ENCODE measurements at regions of chr20 and their contacts with region 1.

Region 1: GRCh38 chr20:47379433-47380150 is 23.1 kb upstream of the ZMYND8 start:
- DNase-seq: no peak
- H3K4me3 ChIP-seq: no peak overlapping the region
- H3K27ac ChIP-seq: no peak overlapping the region
- H3K4me1 ChIP-seq: peaks cover 21% of the 10 kb centered on the region
- H3K27me3 ChIP-seq: no peaks in the 10 kb centered on the region
- CTCF ChIP-seq: no peak

Region 2: GRCh38 chr20:47196091-47197081 is 183.2 kb before region 1 on chr20:
- CTCF ChIA-PET with region 1: interaction called, 9 read pairs
- POLR2A ChIA-PET with region 1: interaction called, 3 read pairs
- intact Hi-C with region 1: loop called (anchors 1 kb)
- DNase-seq: peak; percentile 72 to 82
- H3K4me3 ChIP-seq: no peak overlapping the region
- H3K27ac ChIP-seq: no peak overlapping the region
- H3K4me1 ChIP-seq: 0 out of 2 replicates have a peak, but pooled peaks cover 10% of the 10 kb centered on the region
- H3K27me3 ChIP-seq: no peaks in the 10 kb centered on the region
- CTCF ChIP-seq: peak; percentile 99

Region 3: GRCh38 chr20:47296950-47297349 is 82.6 kb before region 1 on chr20:
- CTCF ChIA-PET with region 1: no interaction called
- POLR2A ChIA-PET with region 1: no interaction called
- intact Hi-C with region 1: loop called (anchors 1 kb)
- DNase-seq: no peak
- H3K4me3 ChIP-seq: no peak overlapping the region
- H3K27ac ChIP-seq: no peak overlapping the region
- H3K4me1 ChIP-seq: 0 out of 2 replicates have a peak, but pooled peaks cover 3% of the 10 kb centered on the region
- H3K27me3 ChIP-seq: no peaks in the 10 kb centered on the region
- CTCF ChIP-seq: no peak

Region 4: DNA sequence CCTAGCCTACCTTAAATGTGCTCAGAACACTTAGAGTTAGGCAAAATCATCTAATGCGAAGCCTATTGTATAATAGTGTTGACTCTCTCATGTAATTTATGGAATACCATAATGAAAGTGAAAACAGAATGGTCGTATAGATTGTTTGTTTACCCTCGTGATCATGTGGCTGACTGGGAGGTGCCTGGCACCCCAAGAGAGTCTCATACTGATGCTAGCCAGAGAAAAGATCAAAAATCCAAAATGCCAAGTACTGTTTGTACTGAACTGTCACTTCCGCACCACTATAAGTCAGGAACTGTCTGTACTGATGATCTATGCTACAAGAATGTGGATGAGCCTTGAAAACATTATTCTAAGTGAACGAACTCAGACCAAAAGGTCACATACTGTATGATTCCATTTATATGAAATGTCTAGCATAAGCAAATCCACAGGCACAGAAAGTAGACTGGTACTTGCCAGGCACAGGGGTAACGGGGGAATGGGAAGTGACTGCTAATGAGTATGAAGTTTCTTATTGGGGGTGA is 45.5 kb before region 1 on chr20:
- CTCF ChIA-PET with region 1: interaction called, 7 read pairs
- POLR2A ChIA-PET with region 1: interaction called, 4 read pairs
- intact Hi-C with region 1: loop called (anchors 5 kb)
- DNase-seq: peak; percentile 50 to 97
- H3K4me3 ChIP-seq: peak overlapping the region; percentile 33; the same call in 1 of the 2 replicates
- H3K27ac ChIP-seq: peak overlapping the region; percentile 69
- H3K4me1 ChIP-seq: peaks cover 67% of the 10 kb centered on the region
- H3K27me3 ChIP-seq: no peaks in the 10 kb centered on the region
- CTCF ChIP-seq: no peak

Region 5: GRCh38 chr20:47445291-47445690 is 65.7 kb after region 1 on chr20:
- CTCF ChIA-PET with region 1: no interaction called
- POLR2A ChIA-PET with region 1: no interaction called
- intact Hi-C with region 1: no loop called
- DNase-seq: no peak
- H3K4me3 ChIP-seq: no peak overlapping the region
- H3K27ac ChIP-seq: no peak overlapping the region
- H3K4me1 ChIP-seq: peaks cover 13% of the 10 kb centered on the region
- H3K27me3 ChIP-seq: no peaks in the 10 kb centered on the region
- CTCF ChIP-seq: no peak

Region 6: DNA sequence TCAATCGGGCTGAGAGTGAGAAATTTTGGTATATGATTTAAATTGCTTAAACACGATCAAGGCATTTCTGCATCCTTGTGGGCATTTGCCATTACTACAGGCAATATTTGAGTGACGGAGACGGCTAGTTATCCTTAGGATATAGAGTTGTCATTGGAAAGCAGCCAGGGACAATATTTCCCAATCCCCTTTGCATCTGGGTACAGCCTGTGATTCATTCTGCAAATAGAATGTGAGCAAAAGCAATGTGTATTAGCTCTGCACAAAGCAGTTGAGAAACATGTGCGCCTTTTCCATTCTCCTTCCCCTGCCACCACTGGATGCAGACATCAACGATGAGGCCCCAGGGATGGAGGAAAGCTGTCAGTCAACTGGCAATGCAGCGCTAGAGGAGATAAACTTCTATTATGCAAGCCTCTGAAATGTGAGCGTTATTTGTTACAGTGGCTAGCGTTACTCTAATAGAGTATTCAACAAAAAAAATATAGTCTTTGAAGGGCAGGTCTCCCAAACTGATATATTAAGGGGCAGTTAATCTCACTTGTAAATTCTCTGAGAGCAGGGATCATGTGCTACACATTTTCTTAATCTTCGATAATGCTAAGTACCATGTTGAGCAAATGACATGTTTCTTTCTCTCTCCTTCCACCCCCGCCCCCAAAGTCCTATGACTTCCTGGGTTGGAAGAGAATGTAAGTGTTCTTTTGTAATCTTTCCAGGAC is 84.9 kb after region 1 on chr20:
- CTCF ChIA-PET with region 1: interaction called, 7 read pairs
- POLR2A ChIA-PET with region 1: no interaction called
- intact Hi-C with region 1: loop called (anchors 1 kb)
- DNase-seq: peak; percentile 79 to 99
- H3K4me3 ChIP-seq: no peak overlapping the region; the same call in 1 of the 2 replicates
- H3K27ac ChIP-seq: peak overlapping the region; percentile 73
- H3K4me1 ChIP-seq: peaks cover 29% of the 10 kb centered on the region
- H3K27me3 ChIP-seq: no peaks in the 10 kb centered on the region
- CTCF ChIP-seq: peak; percentile 78

Region 7: DNA sequence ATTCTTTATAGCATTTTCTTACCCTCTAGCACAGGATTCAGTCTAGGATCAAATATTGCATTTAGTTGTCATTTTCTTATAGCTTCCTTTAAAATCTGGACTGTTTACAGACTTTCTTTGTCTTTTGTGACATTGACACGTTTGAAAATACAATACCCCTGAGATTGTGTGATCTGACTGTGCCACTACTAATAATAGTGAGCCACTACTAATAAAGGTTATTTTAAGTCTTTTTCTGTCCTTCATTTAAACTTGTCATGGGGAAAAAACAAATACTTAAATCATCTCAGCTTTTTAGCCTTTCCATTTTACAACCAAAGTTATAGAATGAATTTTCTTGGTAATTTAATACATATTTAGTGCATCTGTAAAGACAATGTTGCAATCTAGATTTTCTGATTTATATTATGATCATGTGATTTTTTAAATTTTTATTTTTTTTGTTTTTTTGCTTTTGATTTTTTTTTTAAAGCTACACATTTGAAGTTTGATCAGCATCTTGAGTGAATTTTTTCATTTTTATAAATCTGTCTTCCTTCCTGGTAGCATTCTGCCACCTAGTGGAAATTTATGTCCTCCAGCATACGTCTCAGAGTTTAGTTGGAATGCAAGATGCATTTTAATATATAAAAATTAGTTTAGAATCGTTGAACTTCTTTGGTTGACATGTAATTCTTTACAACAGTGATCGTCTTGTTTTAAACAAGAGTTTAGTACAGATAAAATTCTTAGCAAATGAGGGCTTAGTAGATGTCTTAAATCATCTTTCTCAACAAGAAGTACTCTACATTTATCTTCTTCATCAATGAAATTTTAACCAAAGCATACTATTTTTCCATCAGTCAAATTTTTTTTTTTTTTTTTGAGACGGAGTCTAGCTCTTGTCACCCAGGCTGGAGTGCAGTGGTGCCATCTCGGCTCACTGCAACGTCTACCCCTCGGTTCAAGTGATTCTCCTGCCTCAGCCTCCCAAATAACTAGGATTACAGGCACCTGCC is 241.5 kb after region 1 on chr20:
- CTCF ChIA-PET with region 1: interaction called, 18 read pairs
- POLR2A ChIA-PET with region 1: interaction called, 7 read pairs
- intact Hi-C with region 1: loop called (anchors 1 kb)
- DNase-seq: peak; percentile 26 to 61
- H3K4me3 ChIP-seq: no peak overlapping the region
- H3K27ac ChIP-seq: peak overlapping the region; percentile 54
- H3K4me1 ChIP-seq: peaks cover 16% of the 10 kb centered on the region
- H3K27me3 ChIP-seq: no peaks in the 10 kb centered on the region
- CTCF ChIP-seq: peak; percentile 96